HEK293T (cell line): ENCODE measurements at regions of chr12 and their contacts with region 1.

Region 1: DNA sequence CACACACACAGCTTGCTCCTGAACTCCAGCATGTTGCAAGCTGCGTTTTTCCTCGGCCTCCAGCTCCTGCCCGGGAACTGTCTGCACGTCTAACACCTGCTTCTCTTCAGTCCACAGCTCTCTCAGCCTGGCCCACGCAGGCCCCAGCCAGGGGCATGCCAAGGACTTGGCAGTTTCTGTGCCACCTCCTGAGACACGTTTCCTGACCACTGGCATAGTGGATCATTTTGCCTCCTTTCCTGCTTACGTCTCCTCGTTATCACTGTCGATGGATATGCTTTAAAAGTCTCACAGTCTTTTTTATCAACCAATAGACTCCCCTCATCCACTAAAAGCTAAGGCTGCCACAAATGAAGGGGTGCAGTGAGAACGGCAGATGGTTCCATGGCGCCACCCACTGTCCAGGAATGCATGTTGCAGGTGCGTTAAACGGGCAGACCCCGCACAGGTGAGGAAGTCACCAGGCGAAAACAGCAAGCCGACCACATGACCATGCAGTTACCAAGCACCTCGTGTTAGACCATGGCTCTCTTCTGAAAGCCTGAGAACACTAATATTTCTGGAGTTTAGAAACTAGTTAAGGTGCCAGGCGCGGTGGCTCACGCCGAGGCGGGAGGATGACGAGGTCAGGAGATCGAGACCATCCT is 14.7 kb upstream of the TEAD4 start:
- DNase-seq: peak; percentile 55

Region 2: GRCh38 chr12:2884810-2885209 is 59.7 kb before region 1 on chr12:
- CTCF ChIA-PET with region 1: interaction called, 15 read pairs
- POLR2A ChIA-PET with region 1: interaction called, 7 read pairs
- DNase-seq: no peak

Region 3: DNA sequence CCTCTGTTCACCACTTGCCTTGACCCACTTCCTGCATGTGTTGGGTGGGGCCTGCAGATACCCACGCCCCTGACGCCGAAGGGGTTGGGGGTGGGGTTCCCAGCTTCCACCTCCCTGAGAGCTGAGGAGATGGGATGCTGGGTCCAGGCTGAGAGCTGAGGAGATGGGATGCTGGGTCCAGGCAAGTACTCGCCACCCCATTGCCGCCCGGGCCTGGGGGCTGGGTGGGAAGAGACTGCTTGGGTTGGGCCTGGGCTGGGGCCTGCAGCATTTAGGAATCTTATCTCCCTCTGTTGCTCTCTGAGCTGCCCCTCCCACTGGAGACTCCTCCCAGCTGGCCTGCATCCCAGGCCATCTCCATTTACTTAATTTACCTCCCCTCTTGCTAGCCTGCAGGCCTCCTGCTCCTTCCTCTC is 32.1 kb after region 1 on chr12:
- CTCF ChIA-PET with region 1: no interaction called
- POLR2A ChIA-PET with region 1: no interaction called
- DNase-seq: no peak